ENCODE measurements at regions of chr10 and their contacts with region 1.

Region 1: GRCh38 chr10:61188691-61189090 is 244.7 kb upstream of the RHOBTB1 start:
- DNase-seq: peak; percentile 16
- ATAC-seq: peak; percentile 61
- H3K4me3 ChIP-seq: no peak overlapping the region
- H3K27ac ChIP-seq: no peak overlapping the region
- H3K4me1 ChIP-seq: no peaks in the 10 kb centered on the region
- H3K27me3 ChIP-seq: no peaks in the 10 kb centered on the region
- CTCF ChIP-seq: no peak

Region 2: DNA sequence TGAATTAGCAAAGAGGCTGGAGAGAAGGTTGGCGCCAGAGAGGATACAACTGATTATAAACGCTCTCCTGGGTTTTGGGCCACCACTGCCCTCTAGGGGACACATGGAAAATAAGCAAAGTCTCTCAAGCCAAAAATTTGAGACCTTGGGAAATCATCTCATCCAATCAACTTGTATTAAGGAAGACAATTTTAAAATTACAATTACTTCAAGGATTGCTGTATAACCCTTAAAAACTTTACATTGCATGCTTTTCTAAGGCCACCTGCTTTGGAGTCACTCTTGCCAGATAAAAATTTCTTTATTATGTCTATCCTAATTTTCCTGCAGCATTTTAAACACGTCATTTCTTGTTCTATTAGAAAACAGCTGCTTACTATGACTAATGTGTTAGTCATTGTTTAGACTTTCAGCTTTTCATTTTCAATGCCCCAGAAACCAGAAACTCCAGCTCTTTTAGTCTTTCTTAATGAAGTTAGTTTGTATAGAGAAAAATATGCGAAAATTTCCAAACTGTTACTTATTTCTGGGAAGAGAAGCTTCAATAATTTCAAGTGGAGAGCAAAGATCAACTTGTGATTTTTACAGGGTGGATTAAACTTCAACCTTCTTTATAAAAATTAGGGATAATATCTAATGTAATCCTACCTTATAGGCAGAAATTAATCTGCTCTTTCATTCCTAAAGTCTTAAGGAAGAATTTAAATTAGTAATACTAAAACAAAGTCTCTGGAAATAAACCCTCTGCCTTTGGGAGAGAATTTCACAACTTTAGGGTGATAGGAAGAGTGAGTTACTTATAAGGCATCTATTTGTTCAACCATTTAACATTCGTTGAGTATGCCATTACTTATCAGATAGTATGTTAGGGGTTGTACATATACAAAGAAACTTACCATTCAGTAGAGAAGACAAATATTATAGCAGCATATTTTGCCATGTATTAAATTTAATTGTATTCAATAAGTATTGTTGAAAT is 224.1 kb before region 1 on chr10:
- CTCF ChIA-PET with region 1: interaction called, 5 read pairs
- POLR2A ChIA-PET with region 1: no interaction called
- intact Hi-C with region 1: loop called (anchors 1 kb)
- DNase-seq: peak; percentile 98
- ATAC-seq: peak; percentile 86
- H3K4me3 ChIP-seq: peak overlapping the region; percentile 24
- H3K27ac ChIP-seq: peak overlapping the region; percentile 44
- H3K4me1 ChIP-seq: peaks cover 37% of the 10 kb centered on the region
- H3K27me3 ChIP-seq: no peaks in the 10 kb centered on the region
- CTCF ChIP-seq: peak; percentile 100

Region 3: GRCh38 chr10:61140765-61141392 is 47.8 kb before region 1 on chr10:
- CTCF ChIA-PET with region 1: interaction called, 12 read pairs
- POLR2A ChIA-PET with region 1: no interaction called
- intact Hi-C with region 1: loop called (anchors 1 kb)
- DNase-seq: peak; percentile 96
- ATAC-seq: peak; percentile 83
- H3K4me3 ChIP-seq: no peak overlapping the region
- H3K27ac ChIP-seq: no peak overlapping the region
- H3K4me1 ChIP-seq: peaks cover 11% of the 10 kb centered on the region
- H3K27me3 ChIP-seq: no peaks in the 10 kb centered on the region
- CTCF ChIP-seq: peak; percentile 99

Region 4: GRCh38 chr10:61284222-61284890 is 95.7 kb after region 1 on chr10:
- CTCF ChIA-PET with region 1: no interaction called
- POLR2A ChIA-PET with region 1: interaction called, 5 read pairs
- intact Hi-C with region 1: loop called (anchors 2 kb)
- DNase-seq: peak; percentile 98
- ATAC-seq: peak; percentile 66
- H3K4me3 ChIP-seq: peak overlapping the region; percentile 13
- H3K27ac ChIP-seq: no peak overlapping the region
- H3K4me1 ChIP-seq: peaks cover 13% of the 10 kb centered on the region
- H3K27me3 ChIP-seq: no peaks in the 10 kb centered on the region
- CTCF ChIP-seq: peak; percentile 99

Region 5: GRCh38 chr10:62059217-62059920 is 870.7 kb after region 1 on chr10:
- CTCF ChIA-PET with region 1: no interaction called
- POLR2A ChIA-PET with region 1: interaction called, 12 read pairs
- intact Hi-C with region 1: no loop called
- DNase-seq: no peak
- ATAC-seq: no peak
- H3K4me3 ChIP-seq: no peak overlapping the region
- H3K27ac ChIP-seq: no peak overlapping the region
- H3K4me1 ChIP-seq: peaks cover 9% of the 10 kb centered on the region; the same call in 1 of the 2 replicates
- H3K27me3 ChIP-seq: no peaks in the 10 kb centered on the region
- CTCF ChIP-seq: no peak

Measured in PC-3 (cell line).